Endothelial cell of umbilical vein (primary cell): ENCODE measurements at regions of chr7 and their contacts with region 1.

Region 1: DNA sequence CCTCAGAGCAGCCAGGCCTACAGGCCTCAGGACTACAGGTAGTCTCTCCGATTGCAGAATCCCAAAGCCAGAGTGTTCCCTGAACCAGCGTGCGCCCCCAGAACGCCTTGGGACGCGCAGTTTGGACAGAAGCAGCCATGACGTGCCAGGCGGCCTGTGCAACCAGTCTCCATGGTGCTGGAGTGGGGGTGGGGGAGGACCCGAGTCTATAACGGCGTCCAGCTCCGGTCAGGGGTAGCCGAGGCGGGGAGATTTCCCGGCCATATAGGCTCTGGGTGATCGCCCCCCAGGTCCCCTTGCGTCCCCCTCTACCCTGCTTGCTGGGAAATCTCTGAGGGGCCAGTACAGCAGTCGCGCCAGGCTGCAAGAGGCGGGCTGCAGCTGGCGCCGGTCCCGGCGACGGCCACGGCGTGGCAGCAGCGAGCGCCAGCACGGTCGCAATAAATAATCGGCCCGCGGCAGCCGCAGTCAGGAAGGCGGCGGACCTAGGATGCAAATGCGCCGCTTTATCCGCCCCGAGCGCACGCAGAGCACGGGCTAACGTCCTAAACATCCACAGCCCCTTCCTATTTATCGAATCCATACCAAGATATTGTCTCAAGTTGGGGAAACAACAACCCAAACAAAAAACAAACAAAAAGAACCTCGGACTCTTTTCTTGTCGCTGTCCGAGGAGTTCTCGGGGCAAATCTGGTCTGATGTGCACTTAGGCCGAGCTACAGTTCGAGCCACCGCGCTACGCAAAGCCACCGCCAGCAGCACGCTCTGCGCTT is 1.6 kb downstream of the HOXA3 start:
- DNase-seq: peak; percentile 91
- H3K4me3 ChIP-seq: peak overlapping the region; percentile 54 to 85 (median 55)
- H3K27ac ChIP-seq: peak overlapping the region; percentile 96
- H3K4me1 ChIP-seq: peaks cover 75% of the 10 kb centered on the region
- H3K27me3 ChIP-seq: no peaks in the 10 kb centered on the region
- CTCF ChIP-seq: peak; percentile 81 to 89
- POLR2A ChIP-seq: peak; percentile 86

Region 2: GRCh38 chr7:26993816-26994810 is 156.6 kb before region 1 on chr7:
- CTCF ChIA-PET with region 1: no interaction called
- POLR2A ChIA-PET with region 1: no interaction called
- dilution Hi-C with region 1: no loop called
- intact Hi-C with region 1: no loop called
- DNase-seq: no peak
- H3K4me3 ChIP-seq: no peak overlapping the region
- H3K27ac ChIP-seq: no peak overlapping the region
- H3K4me1 ChIP-seq: no peaks in the 10 kb centered on the region
- H3K27me3 ChIP-seq: no peaks in the 10 kb centered on the region
- CTCF ChIP-seq: no peak
- POLR2A ChIP-seq: no peak

Region 3: DNA sequence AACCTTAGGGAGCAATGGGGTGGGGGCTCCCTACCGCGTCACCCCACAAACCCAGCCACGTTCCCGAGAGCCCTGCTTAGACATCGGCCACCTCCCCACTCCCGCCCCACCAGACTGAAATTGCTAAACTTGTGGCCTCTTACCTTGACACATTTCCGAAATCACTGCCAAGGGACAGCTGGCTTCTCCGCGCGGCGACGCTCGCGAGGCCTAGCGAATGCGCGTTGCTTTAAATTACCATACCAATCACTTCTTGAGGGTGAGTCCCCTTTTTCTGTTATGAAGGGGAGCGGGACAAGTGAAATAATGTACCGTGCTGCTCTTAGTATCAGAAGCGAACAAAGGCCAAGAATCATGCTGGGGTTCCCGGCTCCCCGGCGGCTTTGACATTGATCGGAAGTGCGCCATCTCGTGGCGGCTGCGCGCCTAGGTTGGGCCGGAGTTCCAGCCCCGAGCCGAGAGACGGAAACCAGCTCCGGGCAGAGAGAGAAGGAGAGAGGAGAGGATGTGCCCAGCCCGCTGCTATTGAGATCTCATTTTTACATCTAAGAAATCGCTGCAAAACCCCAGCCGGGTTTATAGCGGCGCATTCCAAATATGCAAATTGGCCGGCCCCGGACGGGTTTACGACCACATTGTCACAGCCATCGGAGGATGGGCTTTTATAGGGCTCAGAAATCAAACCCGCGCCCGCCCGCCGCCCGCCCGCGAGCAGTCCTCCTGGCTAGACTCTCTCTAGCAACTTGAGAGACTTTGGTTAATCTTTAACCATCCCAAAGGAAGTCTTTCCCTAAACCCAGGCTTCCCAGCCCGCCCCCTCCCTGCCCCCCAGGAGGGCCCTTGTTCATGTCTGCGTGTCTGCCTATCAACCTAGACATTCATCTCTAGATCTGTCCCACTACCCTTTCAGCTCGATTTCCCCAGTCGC is 29.0 kb after region 1 on chr7:
- CTCF ChIA-PET with region 1: interaction called, 23 read pairs
- POLR2A ChIA-PET with region 1: interaction called, 7 read pairs
- dilution Hi-C with region 1: no loop called
- intact Hi-C with region 1: no loop called
- DNase-seq: peak; percentile 90
- H3K4me3 ChIP-seq: peak overlapping the region; percentile 53 to 94 (median 69)
- H3K27ac ChIP-seq: peak overlapping the region; percentile 96
- H3K4me1 ChIP-seq: peaks cover 65% of the 10 kb centered on the region
- H3K27me3 ChIP-seq: no peaks in the 10 kb centered on the region
- CTCF ChIP-seq: peak; percentile 93 to 97
- POLR2A ChIP-seq: no peak

Region 4: GRCh38 chr7:27204851-27205337 is 54.1 kb after region 1 on chr7:
- CTCF ChIA-PET with region 1: no interaction called
- POLR2A ChIA-PET with region 1: no interaction called
- dilution Hi-C with region 1: no loop called
- intact Hi-C with region 1: no loop called
- DNase-seq: no peak
- H3K4me3 ChIP-seq: no peak overlapping the region
- H3K27ac ChIP-seq: no peak overlapping the region
- H3K4me1 ChIP-seq: peaks cover 18% of the 10 kb centered on the region
- H3K27me3 ChIP-seq: peaks cover 81 to 85% of the 10 kb centered on the region in 2 experiments
- CTCF ChIP-seq: no peak
- POLR2A ChIP-seq: no peak

Region 5: DNA sequence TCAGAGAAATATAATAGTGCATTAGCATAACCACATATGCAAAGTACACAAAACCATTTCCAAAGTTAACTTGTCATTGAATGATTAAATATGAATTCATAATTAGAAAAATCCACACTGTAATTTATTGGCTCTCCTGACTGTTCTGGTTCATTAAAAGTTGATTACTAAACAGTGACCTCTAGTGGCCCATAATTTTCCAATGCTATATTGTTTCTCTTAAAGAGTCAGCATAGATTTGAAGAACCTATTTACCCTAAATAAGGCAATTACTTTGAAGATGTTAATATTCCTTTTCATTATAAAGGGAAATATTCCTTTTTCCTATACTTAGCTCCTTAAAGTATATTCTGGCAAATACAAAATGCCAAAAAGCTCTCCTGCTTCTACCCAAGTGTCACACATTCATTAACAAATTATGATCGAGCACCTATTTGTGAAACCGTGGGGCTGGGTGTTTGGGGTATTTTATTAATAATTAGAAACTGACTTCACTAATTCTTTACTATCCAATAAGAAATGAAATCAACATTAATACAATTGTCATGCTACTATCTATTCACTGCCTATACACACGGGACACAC is 425.7 kb after region 1 on chr7:
- CTCF ChIA-PET with region 1: no interaction called
- POLR2A ChIA-PET with region 1: no interaction called
- dilution Hi-C with region 1: no loop called
- intact Hi-C with region 1: no loop called
- DNase-seq: peak; percentile 70
- H3K4me3 ChIP-seq: no peak overlapping the region
- H3K27ac ChIP-seq: no peak overlapping the region
- H3K4me1 ChIP-seq: no peaks in the 10 kb centered on the region
- H3K27me3 ChIP-seq: no peaks in the 10 kb centered on the region
- CTCF ChIP-seq: peak; percentile 22 to 26
- POLR2A ChIP-seq: no peak